HEK293T (cell line): ENCODE measurements at regions of chr15 and their contacts with region 1.

Region 1: DNA sequence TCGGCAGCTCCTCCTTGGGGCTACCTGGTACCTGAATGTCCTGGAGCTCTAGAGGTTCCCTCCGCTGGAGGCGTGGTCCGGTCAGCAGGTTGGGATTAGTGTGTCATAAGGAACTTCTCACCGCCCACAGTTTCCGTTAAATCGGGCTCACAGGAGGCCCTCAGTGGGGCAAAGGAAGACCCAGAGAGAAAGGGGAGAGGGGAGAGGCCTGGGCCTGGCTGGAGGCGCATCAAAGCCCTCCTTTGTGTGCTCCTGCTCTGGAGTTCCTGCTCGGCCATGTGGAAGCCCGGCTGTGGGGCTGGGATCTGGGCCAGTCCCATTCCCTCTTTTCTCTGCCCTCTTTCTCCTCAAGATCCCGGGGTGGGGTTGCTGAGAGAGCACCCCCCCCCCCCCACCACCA is at the start of gene RLBP1:
- DNase-seq: no peak

Region 2: GRCh38 chr15:89177633-89178306 is 43.8 kb before region 1 on chr15:
- CTCF ChIA-PET with region 1: no interaction called
- POLR2A ChIA-PET with region 1: no interaction called
- DNase-seq: peak; percentile 75

Region 3: GRCh38 chr15:89206908-89207331 is 14.6 kb before region 1 on chr15:
- CTCF ChIA-PET with region 1: interaction called, 25 read pairs
- POLR2A ChIA-PET with region 1: interaction called, 3 read pairs
- DNase-seq: peak; percentile 95